Right cardiac atrium (tissue), 5 donors: ENCODE measurements at regions of chr1 and their contacts with region 1.

Region 1: DNA sequence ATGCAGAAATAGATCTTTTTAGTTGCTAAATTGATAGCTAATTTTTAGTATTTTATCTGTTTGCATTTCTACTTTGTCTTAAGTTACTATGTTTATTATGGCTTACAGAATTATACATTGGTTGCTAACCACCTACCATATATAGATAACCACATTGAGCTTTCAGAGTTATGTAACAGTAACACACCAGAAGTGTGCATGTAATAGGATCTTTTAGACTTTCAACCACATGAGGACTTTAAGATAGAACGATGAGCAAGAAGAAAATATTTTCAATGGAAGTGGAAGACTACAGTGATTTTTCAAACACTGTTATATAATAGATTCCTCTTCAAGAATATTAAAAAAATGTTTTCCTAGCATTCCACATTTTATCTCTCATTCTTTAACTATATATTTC is 28.8 kb downstream of the TOR1AIP1 start:
- DNase-seq: no peak
- ATAC-seq: no peak
- H3K4me3 ChIP-seq: no peak overlapping the region
- H3K27ac ChIP-seq: no peak overlapping the region
- H3K4me1 ChIP-seq: no peaks in the 10 kb centered on the region
- H3K27me3 ChIP-seq: no peaks in the 10 kb centered on the region

Region 2: GRCh38 chr1:179447489-179447888 is 463.4 kb before region 1 on chr1:
- intact Hi-C with region 1: no loop called
- DNase-seq: no peak
- ATAC-seq: no peak
- H3K4me3 ChIP-seq: no peak overlapping the region
- H3K27ac ChIP-seq: no peak overlapping the region
- H3K4me1 ChIP-seq: no peaks in the 10 kb centered on the region
- H3K27me3 ChIP-seq: no peaks in the 10 kb centered on the region

Region 3: DNA sequence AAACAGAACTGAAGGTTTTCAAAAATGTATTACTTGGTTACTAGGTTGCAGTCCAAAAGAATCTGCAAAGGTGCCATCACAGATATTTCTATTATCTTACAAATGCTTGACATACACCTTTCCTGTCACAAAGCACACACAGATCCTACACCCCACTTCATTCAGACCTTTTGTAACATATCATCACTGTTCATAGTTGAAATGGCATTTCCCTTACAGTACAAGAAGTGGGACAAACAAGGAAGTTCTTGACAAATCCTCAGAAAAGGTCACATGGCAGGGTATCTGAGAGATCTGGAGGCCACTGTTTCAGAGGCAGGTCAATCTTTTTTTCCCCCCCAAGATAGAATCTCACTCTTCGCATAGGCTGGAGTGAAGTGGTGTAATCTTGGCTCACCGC is 54.6 kb before region 1 on chr1:
- intact Hi-C with region 1: no loop called
- DNase-seq: no peak
- ATAC-seq: no peak
- H3K4me3 ChIP-seq: no peak overlapping the region
- H3K27ac ChIP-seq: no peak overlapping the region
- H3K4me1 ChIP-seq: no peaks in the 10 kb centered on the region
- H3K27me3 ChIP-seq: no peaks in the 10 kb centered on the region

Region 4: DNA sequence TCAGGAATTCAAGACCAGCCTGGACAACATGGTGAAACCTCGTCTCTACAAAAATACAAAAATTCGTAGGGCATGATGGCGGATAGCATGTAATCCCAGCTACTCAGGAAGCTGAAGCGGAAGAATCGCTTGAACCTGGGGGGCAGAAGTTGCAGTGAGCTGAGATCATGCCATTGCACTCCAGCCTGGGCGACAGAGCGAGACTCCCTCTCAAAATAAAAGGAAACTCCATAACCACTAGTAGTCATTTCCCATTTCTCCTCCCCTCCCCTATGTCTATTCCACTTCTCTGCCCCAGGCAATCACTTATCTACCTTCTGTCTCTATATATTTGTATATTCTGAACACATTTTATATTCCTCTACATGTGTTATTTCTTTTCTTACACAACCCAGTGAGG is 39.7 kb after region 1 on chr1:
- intact Hi-C with region 1: no loop called
- DNase-seq: no peak
- ATAC-seq: no peak
- H3K4me3 ChIP-seq: no peak overlapping the region
- H3K27ac ChIP-seq: no peak overlapping the region
- H3K4me1 ChIP-seq: peaks cover 2% of the 10 kb centered on the region
- H3K27me3 ChIP-seq: no peaks in the 10 kb centered on the region

Region 5: GRCh38 chr1:180003026-180003695 is 92.2 kb after region 1 on chr1:
- intact Hi-C with region 1: loop called in 1 of 4 experiments (anchors 10 kb)
- DNase-seq: no peak
- ATAC-seq: no peak
- H3K4me3 ChIP-seq: no peak overlapping the region
- H3K27ac ChIP-seq: no peak overlapping the region
- H3K4me1 ChIP-seq: no peaks in the 10 kb centered on the region
- H3K27me3 ChIP-seq: no peaks in the 10 kb centered on the region

Region 6: DNA sequence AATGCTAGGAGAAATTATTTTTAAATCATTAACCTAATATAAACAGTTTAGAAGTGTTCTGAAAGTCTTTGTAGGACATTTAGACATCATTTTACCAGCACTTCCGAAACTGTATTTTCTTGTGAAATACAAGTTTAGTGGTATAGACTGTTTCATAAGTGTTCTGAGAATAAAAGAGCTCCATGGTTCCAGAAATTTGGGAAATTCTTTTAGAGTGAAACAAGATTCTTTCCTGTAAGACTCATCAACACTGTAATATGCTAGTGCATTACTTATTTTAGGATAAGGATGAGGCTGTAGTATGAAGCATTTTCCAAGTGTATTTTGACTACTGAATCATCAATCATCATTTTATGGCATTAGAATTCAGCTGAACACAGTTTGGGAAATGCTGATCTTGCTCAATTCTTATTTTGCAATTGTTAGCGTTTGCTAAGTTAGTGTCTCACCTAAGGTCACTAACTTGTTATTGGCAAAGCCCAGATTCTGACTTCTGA is 117.1 kb after region 1 on chr1:
- intact Hi-C with region 1: loop called in 1 of 4 experiments (anchors 10 kb)
- DNase-seq: no peak
- ATAC-seq: no peak
- H3K4me3 ChIP-seq: no peak overlapping the region
- H3K27ac ChIP-seq: no peak overlapping the region
- H3K4me1 ChIP-seq: no peaks in the 10 kb centered on the region
- H3K27me3 ChIP-seq: no peaks in the 10 kb centered on the region